Caco-2 (cell line): ENCODE measurements at regions of chr3 and their contacts with region 1.

Region 1: DNA sequence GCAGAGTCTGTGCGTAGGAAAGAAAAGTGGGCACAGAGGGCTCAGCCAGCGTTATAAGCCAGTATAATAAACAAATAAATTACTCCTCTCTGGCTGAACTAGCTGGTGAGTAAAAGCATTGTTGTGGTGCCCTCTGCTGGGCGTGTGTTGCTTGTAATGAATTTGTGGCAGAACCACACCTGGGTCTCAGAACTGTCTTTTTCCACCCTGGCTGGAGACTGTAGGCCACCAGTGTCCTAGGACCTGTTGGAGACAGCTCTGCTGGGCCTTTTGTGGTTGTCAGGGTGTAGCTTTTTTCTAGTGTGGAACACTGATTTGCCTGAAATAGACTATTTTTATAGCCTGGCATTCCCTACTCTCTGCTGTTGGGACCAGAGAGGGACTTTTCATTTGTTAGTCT is 130.5 kb upstream of the EIF1B start:
- DNase-seq: peak; percentile 59 to 74
- H3K4me3 ChIP-seq: no peak overlapping the region
- H3K4me3 Mint-ChIP-seq: no peak overlapping the region
- H3K27ac Mint-ChIP-seq: no peak overlapping the region
- H3K4me1 ChIP-seq: no peaks in the 10 kb centered on the region
- H3K4me1 Mint-ChIP-seq: no peaks in the 10 kb centered on the region
- H3K27me3 ChIP-seq: no peaks in the 10 kb centered on the region
- H3K27me3 Mint-ChIP-seq: peaks cover 7% of the 10 kb centered on the region
- CTCF ChIP-seq: peak; percentile 69 to 73

Region 2: DNA sequence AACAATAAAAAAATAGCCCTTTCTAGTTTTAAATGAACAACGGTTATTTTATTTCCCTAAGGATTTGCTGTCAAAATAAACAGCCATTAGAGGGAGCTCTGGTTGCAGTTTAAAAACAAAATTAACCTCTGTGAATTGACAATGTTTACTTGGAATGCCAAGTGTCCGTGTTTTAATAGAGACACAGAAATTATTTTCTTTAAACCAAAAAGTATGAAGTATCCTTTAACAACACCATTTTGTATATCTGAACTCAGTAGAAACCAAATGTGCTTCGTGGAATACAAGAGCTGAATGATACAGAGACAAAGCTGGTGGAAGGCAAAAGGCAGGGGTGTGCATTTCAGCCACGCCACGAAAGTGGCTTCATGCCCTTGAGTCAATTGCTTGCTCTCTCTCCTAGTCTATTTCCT is 637.1 kb before region 1 on chr3:
- CTCF ChIA-PET with region 1: no interaction called
- POLR2A ChIA-PET with region 1: no interaction called
- intact Hi-C with region 1: loop called (anchors 2 kb)
- DNase-seq: no peak
- H3K4me3 ChIP-seq: no peak overlapping the region
- H3K4me3 Mint-ChIP-seq: no peak overlapping the region
- H3K27ac Mint-ChIP-seq: no peak overlapping the region
- H3K4me1 ChIP-seq: no peaks in the 10 kb centered on the region
- H3K4me1 Mint-ChIP-seq: no peaks in the 10 kb centered on the region
- H3K27me3 ChIP-seq: no peaks in the 10 kb centered on the region
- H3K27me3 Mint-ChIP-seq: peaks cover 10% of the 10 kb centered on the region
- CTCF ChIP-seq: peak; percentile 30 to 36

Region 3: DNA sequence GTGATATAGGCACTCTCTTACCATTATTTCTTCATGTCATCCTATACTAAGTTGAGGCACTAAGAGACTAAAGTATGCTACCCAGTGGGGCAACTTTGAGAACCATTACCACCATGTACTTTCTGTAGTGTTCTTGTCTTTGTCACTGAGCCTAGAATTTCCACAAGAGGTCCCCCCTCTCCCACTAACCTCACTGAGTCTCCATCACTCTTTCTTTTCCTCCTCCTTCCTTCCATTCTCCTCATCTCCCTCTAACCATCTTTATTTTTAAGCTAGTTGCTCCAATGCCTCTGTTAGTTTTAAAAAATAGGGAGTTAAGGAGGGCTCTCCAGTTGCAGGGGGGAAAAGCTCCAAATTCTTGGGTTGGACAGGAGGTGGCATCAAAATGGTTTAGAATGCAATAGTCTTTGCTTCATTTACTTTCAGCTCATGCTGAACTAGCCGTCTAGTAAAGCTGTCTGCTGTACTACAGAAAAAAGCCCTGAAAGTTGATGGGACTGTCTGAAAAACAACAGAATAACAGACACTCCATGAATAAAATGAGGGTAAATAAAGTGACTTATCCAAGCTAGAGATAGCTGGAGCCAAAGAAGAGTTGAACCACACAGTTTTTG is 454.7 kb before region 1 on chr3:
- CTCF ChIA-PET with region 1: interaction called, 3 read pairs
- POLR2A ChIA-PET with region 1: no interaction called
- intact Hi-C with region 1: loop called (anchors 5 kb)
- DNase-seq: no peak
- H3K4me3 ChIP-seq: no peak overlapping the region
- H3K4me3 Mint-ChIP-seq: no peak overlapping the region
- H3K27ac Mint-ChIP-seq: no peak overlapping the region
- H3K4me1 ChIP-seq: no peaks in the 10 kb centered on the region; the same call in 1 of the 2 replicates
- H3K4me1 Mint-ChIP-seq: peaks cover 7% of the 10 kb centered on the region
- H3K27me3 ChIP-seq: no peaks in the 10 kb centered on the region
- H3K27me3 Mint-ChIP-seq: no peaks in the 10 kb centered on the region
- CTCF ChIP-seq: peak; percentile 18 to 24

Region 4: DNA sequence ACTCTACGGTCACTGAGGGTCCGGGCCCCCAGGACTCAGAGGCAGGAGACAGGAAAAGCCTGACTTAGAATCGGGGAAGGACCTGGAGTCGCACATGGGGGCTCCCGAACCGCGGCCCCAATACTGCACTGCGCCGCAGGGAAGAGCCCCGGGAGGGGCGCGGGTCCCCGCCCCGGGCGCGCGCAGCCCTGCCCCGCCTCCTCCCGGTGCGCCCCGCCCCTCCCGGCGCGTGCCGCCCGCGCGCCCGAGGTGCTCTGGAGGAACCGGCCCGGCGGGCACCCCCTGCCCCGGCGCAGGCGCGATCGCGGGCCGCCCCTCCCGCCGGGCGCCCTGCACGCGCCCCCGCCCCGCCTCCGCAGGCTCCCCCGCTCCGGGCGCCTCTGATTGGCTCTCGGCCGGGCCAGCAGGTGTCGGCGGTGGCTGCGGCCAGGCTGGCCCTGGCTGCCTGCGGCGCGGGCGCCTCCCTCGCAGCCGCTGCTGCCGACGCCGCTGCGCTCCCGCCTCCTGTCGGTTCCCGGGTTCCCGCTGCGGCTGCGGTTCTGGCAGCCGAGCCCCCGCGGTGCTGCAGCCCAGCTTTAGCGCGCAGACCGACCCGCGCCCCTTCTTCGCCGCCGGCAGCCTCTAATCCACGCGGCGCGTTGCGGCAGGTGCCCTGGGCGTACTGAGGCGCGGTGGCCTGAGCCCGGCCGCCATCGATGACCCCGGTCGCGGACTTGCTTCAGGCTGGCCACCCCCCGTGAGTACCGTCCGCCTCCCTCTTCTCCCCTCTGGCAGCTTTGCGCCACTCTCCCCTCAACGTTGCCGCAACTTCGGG is 369.6 kb before region 1 on chr3 and contains the start of gene MYRIP:
- CTCF ChIA-PET with region 1: no interaction called
- POLR2A ChIA-PET with region 1: no interaction called
- intact Hi-C with region 1: loop called (anchors 2 kb)
- DNase-seq: peak; percentile 65 to 87
- H3K4me3 ChIP-seq: peak within 1 kb of the TSS; percentile 65
- H3K4me3 Mint-ChIP-seq: peak within 1 kb of the TSS; percentile 67
- H3K27ac Mint-ChIP-seq: no peak within 1 kb of the TSS
- H3K4me1 ChIP-seq: peaks cover 7% of the 10 kb centered on the region; the same call in 1 of the 2 replicates
- H3K4me1 Mint-ChIP-seq: no peaks in the 10 kb centered on the region
- H3K27me3 ChIP-seq: peaks cover 4% of the 10 kb centered on the region
- H3K27me3 Mint-ChIP-seq: peaks cover 31% of the 10 kb centered on the region
- CTCF ChIP-seq: no peak
- total RNA-seq, gene MYRIP: 0.59 and 0.77 TPM in 2 replicates

Region 5: GRCh38 chr3:39990532-39990931 is 188.5 kb before region 1 on chr3:
- CTCF ChIA-PET with region 1: no interaction called
- POLR2A ChIA-PET with region 1: no interaction called
- intact Hi-C with region 1: loop called (anchors 1 kb)
- DNase-seq: peak; percentile 41 to 59
- H3K4me3 ChIP-seq: no peak overlapping the region
- H3K4me3 Mint-ChIP-seq: no peak overlapping the region
- H3K27ac Mint-ChIP-seq: no peak overlapping the region
- H3K4me1 ChIP-seq: no peaks in the 10 kb centered on the region
- H3K4me1 Mint-ChIP-seq: peaks cover 7% of the 10 kb centered on the region
- H3K27me3 ChIP-seq: no peaks in the 10 kb centered on the region
- H3K27me3 Mint-ChIP-seq: no peaks in the 10 kb centered on the region
- CTCF ChIP-seq: peak; percentile 49 to 57

Region 6: DNA sequence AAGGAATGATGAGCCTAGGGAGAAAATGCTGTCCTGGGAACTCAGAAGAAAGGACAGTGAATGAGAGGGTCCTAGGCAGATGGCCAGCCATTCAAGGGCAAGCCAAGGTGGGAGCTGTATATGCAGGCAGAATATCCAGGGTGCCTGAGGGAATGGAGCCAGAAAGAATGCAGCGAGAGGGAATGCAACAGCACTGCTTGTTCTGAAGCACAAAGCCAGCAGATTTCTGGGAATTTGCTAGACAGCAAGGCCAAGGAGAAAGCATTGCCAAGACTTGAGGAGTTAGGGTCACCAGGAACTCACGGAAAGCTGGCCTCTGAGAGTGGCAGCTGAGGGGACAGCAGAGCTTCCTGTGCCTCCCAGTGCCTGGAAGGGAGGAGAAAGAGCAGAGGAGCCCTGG is 169.0 kb before region 1 on chr3:
- CTCF ChIA-PET with region 1: no interaction called
- POLR2A ChIA-PET with region 1: no interaction called
- intact Hi-C with region 1: loop called (anchors 10 kb)
- DNase-seq: no peak
- H3K4me3 ChIP-seq: no peak overlapping the region
- H3K4me3 Mint-ChIP-seq: no peak overlapping the region
- H3K27ac Mint-ChIP-seq: no peak overlapping the region
- H3K4me1 ChIP-seq: no peaks in the 10 kb centered on the region
- H3K4me1 Mint-ChIP-seq: peaks cover 5% of the 10 kb centered on the region
- H3K27me3 ChIP-seq: no peaks in the 10 kb centered on the region
- H3K27me3 Mint-ChIP-seq: no peaks in the 10 kb centered on the region
- CTCF ChIP-seq: no peak